ENCODE measurements at regions of chr11 and their contacts with region 1.

Region 1: DNA sequence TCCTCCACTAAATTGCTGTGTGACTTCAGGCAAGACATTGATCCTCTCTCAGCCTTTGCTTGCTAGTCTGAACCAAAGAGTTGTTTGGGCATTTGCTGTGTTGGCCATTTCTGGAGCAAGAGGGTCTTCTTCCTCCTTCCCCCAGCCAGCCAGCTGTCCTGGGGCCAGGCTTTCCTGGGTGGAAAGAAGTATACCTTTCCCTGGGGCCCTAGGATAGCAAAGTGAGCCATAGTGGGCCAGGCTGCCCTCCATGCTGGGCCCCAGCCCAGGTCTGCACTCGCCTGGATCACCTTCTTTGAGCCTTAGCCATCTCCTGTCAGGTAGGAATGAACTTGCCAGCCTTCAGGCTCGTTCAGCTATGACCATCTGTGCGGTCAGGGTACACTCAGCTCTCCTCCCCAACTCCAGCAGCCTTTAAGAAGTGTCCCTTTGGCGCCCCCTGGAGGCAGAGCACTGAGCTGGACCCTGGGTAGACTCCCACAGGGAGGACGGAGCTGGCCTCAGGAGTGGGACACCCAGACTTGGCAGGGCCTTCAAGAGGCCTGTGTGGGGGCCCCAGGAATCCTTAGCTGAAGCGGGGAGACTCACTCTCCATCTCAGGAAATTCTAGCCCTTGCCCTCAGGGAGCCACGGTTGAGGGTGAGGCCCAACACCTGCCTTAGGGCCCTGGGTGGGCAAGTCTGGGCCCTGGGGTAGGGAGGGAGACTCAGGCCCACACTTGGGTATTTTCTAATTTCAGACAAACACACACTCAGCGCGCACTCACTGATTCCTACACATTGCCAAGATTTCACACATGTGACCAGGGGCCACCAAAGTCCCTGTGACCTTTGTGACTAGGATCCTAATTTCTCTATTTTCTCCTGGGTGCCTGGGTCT is 35.6 kb upstream of the TPBGL start:
- DNase-seq: peak; percentile 91
- H3K4me3 Mint-ChIP-seq: no peak overlapping the region
- H3K27ac Mint-ChIP-seq: no peak overlapping the region
- H3K4me1 Mint-ChIP-seq: no peaks in the 10 kb centered on the region
- H3K27me3 Mint-ChIP-seq: peaks cover 13% of the 10 kb centered on the region

Region 2: GRCh38 chr11:75011357-75011756 is 193.6 kb before region 1 on chr11:
- CTCF ChIA-PET with region 1: no interaction called
- DNase-seq: no peak
- H3K4me3 Mint-ChIP-seq: no peak overlapping the region
- H3K27ac Mint-ChIP-seq: no peak overlapping the region
- H3K4me1 Mint-ChIP-seq: no peaks in the 10 kb centered on the region
- H3K27me3 Mint-ChIP-seq: no peaks in the 10 kb centered on the region

Region 3: GRCh38 chr11:75022759-75023396 is 182.0 kb before region 1 on chr11:
- CTCF ChIA-PET with region 1: interaction called, 39 read pairs
- DNase-seq: peak; percentile 85
- H3K4me3 Mint-ChIP-seq: no peak overlapping the region
- H3K27ac Mint-ChIP-seq: no peak overlapping the region
- H3K4me1 Mint-ChIP-seq: no peaks in the 10 kb centered on the region
- H3K27me3 Mint-ChIP-seq: no peaks in the 10 kb centered on the region

Region 4: DNA sequence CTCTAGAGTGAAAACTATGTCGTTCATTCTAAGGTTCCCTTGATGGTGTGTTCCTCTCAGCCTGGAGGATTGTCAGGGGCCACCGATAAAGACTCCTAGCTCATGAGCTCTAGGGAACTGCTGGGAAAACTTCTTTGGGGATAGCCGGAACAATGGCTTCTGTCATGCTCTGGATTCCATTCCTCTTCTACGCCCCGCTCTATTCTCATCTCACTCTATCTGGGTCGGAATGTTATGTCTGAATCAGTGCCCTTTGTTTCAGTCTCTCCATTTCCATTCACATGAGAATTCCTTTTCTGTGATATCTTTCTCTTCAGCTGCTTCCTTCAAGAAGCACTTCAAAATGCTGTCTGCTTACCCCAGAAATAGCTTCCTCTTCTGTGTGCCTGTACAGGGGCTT is 70.9 kb before region 1 on chr11:
- CTCF ChIA-PET with region 1: interaction called, 524 read pairs
- DNase-seq: no peak
- H3K4me3 Mint-ChIP-seq: no peak overlapping the region
- H3K27ac Mint-ChIP-seq: no peak overlapping the region
- H3K4me1 Mint-ChIP-seq: no peaks in the 10 kb centered on the region
- H3K27me3 Mint-ChIP-seq: peaks cover 61% of the 10 kb centered on the region

Region 5: DNA sequence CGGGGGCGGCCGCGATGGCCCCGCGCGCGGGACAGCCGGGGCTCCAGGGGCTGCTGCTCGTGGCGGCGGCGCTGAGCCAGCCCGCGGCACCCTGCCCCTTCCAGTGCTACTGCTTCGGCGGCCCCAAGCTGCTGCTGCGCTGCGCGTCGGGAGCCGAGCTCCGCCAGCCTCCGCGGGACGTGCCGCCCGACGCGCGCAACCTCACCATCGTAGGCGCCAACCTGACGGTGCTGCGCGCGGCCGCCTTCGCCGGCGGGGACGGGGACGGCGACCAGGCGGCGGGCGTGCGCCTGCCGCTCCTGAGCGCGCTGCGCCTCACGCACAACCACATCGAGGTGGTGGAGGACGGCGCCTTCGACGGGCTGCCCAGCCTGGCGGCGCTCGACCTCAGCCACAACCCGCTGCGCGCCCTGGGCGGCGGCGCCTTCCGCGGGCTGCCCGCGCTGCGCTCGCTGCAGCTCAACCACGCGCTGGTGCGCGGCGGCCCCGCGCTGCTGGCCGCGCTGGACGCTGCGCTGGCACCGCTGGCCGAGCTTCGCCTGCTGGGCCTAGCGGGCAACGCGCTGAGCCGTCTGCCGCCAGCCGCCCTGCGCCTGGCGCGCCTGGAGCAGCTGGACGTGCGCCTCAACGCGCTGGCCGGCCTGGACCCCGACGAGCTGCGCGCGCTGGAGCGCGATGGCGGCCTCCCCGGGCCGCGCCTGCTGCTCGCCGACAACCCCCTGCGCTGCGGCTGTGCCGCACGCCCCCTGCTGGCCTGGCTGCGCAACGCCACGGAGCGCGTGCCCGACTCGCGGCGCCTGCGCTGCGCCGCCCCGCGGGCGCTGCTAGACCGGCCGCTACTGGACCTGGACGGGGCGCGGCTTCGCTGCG is 36.3 kb after region 1 on chr11:
- CTCF ChIA-PET with region 1: interaction called, 14 read pairs
- DNase-seq: peak; percentile 87
- H3K4me3 Mint-ChIP-seq: peak overlapping the region; percentile 62
- H3K27ac Mint-ChIP-seq: no peak overlapping the region
- H3K4me1 Mint-ChIP-seq: peaks cover 13% of the 10 kb centered on the region
- H3K27me3 Mint-ChIP-seq: peaks cover 90% of the 10 kb centered on the region